CD4-positive, alpha-beta T cell (primary cell): ENCODE measurements at regions of chr16 and their contacts with region 1.

Region 1: DNA sequence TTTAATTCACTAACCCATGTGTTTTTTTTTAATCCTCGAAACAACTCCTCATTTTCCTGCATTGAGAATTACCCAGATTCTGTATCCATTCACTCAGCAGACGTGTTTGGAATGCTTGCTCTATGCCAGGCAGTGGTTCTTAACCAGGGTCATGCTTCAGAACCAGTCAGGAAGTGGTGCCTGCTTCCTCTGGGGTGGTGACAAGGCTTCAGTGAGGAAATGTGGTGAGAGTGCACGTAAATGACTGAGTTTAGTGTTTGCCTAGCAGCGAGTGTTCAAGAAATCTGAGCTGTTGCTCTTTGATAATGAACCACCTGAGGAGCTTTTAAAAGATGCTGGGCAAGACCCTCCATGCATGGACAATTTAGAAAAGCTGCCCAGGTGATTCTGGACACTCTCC is 9.9 kb downstream of the ZFP90 start:
- DNase-seq: peak in 10 of 14 experiments; percentile 6 to 73 (median 47)
- ATAC-seq: peak; percentile 100
- H3K4me3 ChIP-seq: no peak overlapping the region
- H3K4me3 Mint-ChIP-seq: peak overlapping the region; percentile 52
- H3K27ac ChIP-seq: no peak overlapping the region
- H3K27ac Mint-ChIP-seq: peak overlapping the region; percentile 87
- H3K4me1 ChIP-seq: peaks cover 10% of the 10 kb centered on the region
- H3K4me1 Mint-ChIP-seq: peaks cover 39% of the 10 kb centered on the region
- H3K27me3 ChIP-seq: no peaks in the 10 kb centered on the region
- H3K27me3 Mint-ChIP-seq: no peaks in the 10 kb centered on the region
- CTCF ChIP-seq: no peak

Region 2: DNA sequence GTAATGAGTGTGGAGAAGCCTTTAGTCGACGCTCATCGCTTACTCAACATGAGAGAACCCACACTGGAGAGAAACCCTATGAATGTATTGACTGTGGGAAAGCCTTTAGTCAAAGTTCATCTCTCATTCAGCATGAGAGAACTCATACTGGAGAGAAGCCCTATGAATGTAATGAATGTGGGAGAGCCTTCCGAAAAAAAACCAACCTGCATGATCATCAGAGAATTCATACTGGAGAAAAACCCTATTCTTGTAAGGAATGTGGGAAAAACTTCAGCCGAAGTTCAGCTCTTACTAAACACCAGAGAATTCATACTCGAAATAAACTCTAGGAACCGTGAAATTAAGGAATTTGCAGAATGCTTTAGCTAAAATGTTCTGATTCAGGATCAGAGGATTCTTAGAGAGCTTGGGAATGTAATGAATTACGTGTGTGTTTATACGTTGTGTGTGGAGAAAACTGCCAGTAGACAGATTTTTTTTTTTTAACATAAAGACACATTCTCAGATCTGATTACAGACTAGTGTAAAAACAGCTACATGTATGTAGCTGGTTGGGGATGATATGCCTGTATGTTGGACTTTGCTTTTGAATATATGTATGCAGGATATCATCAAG is 15.5 kb after region 1 on chr16:
- CTCF ChIA-PET with region 1: no interaction called
- POLR2A ChIA-PET with region 1: no interaction called
- intact Hi-C with region 1: loop called in 1 of 2 experiments (anchors 2 kb)
- DNase-seq: no peak
- ATAC-seq: no peak
- H3K4me3 ChIP-seq: no peak overlapping the region
- H3K4me3 Mint-ChIP-seq: no peak overlapping the region
- H3K27ac ChIP-seq: no peak overlapping the region
- H3K27ac Mint-ChIP-seq: no peak overlapping the region
- H3K4me1 ChIP-seq: no peaks in the 10 kb centered on the region
- H3K4me1 Mint-ChIP-seq: no peaks in the 10 kb centered on the region
- H3K27me3 ChIP-seq: no peaks in the 10 kb centered on the region
- H3K27me3 Mint-ChIP-seq: no peaks in the 10 kb centered on the region
- CTCF ChIP-seq: no peak

Region 3: DNA sequence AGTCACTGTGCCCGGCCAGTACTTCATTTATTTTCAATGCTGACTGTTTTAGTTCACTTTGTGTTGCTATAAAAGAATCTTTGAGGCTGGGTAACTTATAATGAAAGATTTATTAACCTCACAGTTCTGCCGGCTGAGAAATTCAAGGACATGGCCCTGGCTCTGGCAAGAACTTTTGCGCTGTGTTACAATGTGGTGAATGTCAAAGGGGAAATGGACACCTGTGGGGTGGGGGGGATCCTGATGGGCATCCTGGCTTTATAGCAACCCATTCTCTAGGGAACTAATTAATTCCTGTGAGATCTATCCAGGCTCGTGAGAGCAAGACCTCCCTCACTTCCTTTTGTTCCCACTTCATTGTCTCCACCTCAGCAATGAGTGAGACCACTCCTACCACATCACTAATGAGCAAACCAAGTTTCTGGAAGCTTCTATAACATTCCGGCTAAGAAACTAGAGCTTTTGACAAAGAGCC is 79.0 kb after region 1 on chr16:
- CTCF ChIA-PET with region 1: no interaction called
- POLR2A ChIA-PET with region 1: no interaction called
- intact Hi-C with region 1: no loop called
- DNase-seq: no peak
- ATAC-seq: no peak
- H3K4me3 ChIP-seq: no peak overlapping the region
- H3K4me3 Mint-ChIP-seq: no peak overlapping the region
- H3K27ac ChIP-seq: no peak overlapping the region
- H3K27ac Mint-ChIP-seq: no peak overlapping the region
- H3K4me1 ChIP-seq: no peaks in the 10 kb centered on the region
- H3K4me1 Mint-ChIP-seq: no peaks in the 10 kb centered on the region
- H3K27me3 ChIP-seq: no peaks in the 10 kb centered on the region
- H3K27me3 Mint-ChIP-seq: peaks cover 13% of the 10 kb centered on the region
- CTCF ChIP-seq: no peak